A549 (cell line): ENCODE measurements at regions of chr19 and their contacts with region 1.

Region 1: GRCh38 chr19:40425450-40426287 is at the start of gene SERTAD1:
- DNase-seq: peak; percentile 100
- ATAC-seq: peak; percentile 78 to 85
- H3K4me3 ChIP-seq: peak within 1 kb of the TSS; percentile 66
- H3K27ac ChIP-seq: peak within 1 kb of the TSS; percentile 93 to 94
- H3K4me1 ChIP-seq: peaks cover 25% of the 10 kb centered on the region
- CTCF ChIP-seq: peak; percentile 100
- EP300 ChIP-seq: no peak; a peak in 1 of 5 replicates
- POLR2A ChIP-seq: peak; percentile 99
- RAD21 ChIP-seq: peak; percentile 11 to 73; a peak in 4 of 5 replicates
- polyA plus RNA-seq, gene SERTAD1: 10.0 and 10.7 TPM in 2 replicates

Region 2: GRCh38 chr19:40348125-40348913 is 77.3 kb before region 1 on chr19 and contains the starts of genes C19orf47 and PLD3:
- CTCF ChIA-PET with region 1: interaction called, 8 read pairs
- POLR2A ChIA-PET with region 1: interaction called, 19 read pairs
- DNase-seq: peak; percentile 100
- ATAC-seq: peak; percentile 98 to 99
- H3K4me3 ChIP-seq: peak within 1 kb of the TSS; percentile 80
- H3K27ac ChIP-seq: peak within 1 kb of the TSS; percentile 83 to 84
- H3K4me1 ChIP-seq: peaks cover 8% of the 10 kb centered on the region
- CTCF ChIP-seq: no peak
- EP300 ChIP-seq: no peak; a peak in 1 of 5 replicates
- POLR2A ChIP-seq: peak; percentile 99
- RAD21 ChIP-seq: no peak
- polyA plus RNA-seq, gene C19orf47: 32.8 and 39.8 TPM in 2 replicates
- polyA plus RNA-seq, gene PLD3: 290 and 350 TPM in 2 replicates

Region 3: DNA sequence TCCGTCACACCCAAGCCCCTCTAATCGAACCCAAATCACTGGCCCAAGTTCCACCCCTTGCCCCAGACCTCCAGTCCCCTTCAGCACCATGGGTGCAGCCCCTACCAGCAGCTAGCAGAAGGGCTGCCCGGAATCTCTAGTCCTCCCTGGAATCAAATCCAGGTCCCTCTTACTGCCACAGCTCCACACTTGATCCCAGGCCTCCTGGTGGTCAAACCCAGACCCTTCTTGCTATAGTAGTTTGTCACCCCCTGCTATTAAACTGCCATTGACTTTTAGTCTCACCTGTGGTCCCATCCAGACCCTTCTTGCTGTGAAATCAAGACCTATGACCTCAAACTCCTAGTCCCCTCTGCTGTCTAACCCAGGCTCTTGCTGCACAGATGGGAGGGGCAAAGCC is 44.3 kb before region 1 on chr19:
- CTCF ChIA-PET with region 1: interaction called, 11 read pairs
- POLR2A ChIA-PET with region 1: interaction called, 8 read pairs
- DNase-seq: peak in 1 of 2 experiments; percentile 68
- ATAC-seq: peak; percentile 27 to 43; a peak in 3 of 6 replicates
- H3K4me3 ChIP-seq: no peak overlapping the region
- H3K27ac ChIP-seq: no peak overlapping the region
- H3K4me1 ChIP-seq: no peaks in the 10 kb centered on the region
- CTCF ChIP-seq: no peak
- EP300 ChIP-seq: no peak
- POLR2A ChIP-seq: no peak
- RAD21 ChIP-seq: no peak

Region 4: GRCh38 chr19:40403262-40403984 is 22.2 kb before region 1 on chr19:
- CTCF ChIA-PET with region 1: interaction called, 240 read pairs
- POLR2A ChIA-PET with region 1: interaction called, 27 read pairs
- DNase-seq: peak; percentile 98 to 100
- ATAC-seq: peak; percentile 83 to 92
- H3K4me3 ChIP-seq: peak overlapping the region; percentile 61
- H3K27ac ChIP-seq: peak overlapping the region; percentile 66 to 84
- H3K4me1 ChIP-seq: peaks cover 10% of the 10 kb centered on the region
- CTCF ChIP-seq: no peak
- EP300 ChIP-seq: no peak
- POLR2A ChIP-seq: peak; percentile 57
- RAD21 ChIP-seq: no peak

Region 5: GRCh38 chr19:40529093-40529954 is 103.7 kb after region 1 on chr19:
- CTCF ChIA-PET with region 1: interaction called, 11 read pairs
- POLR2A ChIA-PET with region 1: interaction called, 3 read pairs
- DNase-seq: peak; percentile 94 to 100
- ATAC-seq: peak; percentile 37 to 78
- H3K4me3 ChIP-seq: peak overlapping the region; percentile 50
- H3K27ac ChIP-seq: peak overlapping the region; percentile 55 to 79
- H3K4me1 ChIP-seq: peaks cover 18% of the 10 kb centered on the region
- CTCF ChIP-seq: peak; percentile 99
- EP300 ChIP-seq: 0 out of 5 replicates have a peak, but pooled peaks of 1 of the 2 experiments have one; percentile 17
- POLR2A ChIP-seq: no peak
- RAD21 ChIP-seq: peak; percentile 43 to 72; a peak in 4 of 5 replicates

Region 6: DNA sequence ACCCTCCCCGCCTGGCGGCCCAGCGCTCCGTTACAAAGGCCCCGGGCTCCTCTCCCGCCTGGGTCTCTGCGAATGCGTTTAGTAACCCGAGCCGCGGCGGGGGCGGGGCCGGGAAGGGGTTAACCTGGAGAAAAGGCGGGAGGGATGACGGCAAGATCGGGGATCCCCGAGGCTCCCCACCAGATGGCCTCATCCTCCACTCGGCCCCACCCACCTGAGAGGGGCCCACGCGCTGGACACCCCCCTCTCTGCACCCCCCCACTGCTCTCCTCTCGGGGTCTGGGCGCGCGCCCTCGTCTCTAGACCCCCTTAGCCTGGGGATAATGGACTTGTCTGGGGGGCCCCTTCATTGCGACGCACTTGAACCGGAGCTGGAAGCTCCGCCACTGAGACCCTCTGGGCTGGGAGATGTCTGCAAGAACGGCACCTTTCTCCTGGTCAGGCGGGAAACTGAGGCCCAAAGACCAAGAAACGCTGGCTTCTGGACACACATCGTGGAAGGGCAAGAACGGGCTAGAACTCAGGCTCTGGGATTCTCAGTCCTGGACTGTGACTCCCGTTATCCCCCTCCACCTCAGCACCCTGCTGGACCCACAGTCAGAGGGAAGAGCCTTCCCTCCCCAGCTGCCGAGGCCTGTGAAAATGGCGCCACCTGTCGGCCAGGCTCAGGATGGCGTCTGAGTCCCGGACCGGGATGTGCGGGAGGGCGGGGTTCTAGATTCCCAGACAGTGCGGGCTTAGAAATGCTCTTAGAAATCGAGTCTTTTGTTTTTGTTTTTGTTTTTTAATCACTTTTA is 172.7 kb after region 1 on chr19:
- CTCF ChIA-PET with region 1: interaction called, 13 read pairs
- POLR2A ChIA-PET with region 1: interaction called, 4 read pairs
- DNase-seq: peak; percentile 97 to 99
- ATAC-seq: peak; percentile 49 to 76
- H3K4me3 ChIP-seq: peak overlapping the region; percentile 47
- H3K27ac ChIP-seq: peak overlapping the region; percentile 66 to 85
- H3K4me1 ChIP-seq: peaks cover 56% of the 10 kb centered on the region
- CTCF ChIP-seq: peak; percentile 100
- EP300 ChIP-seq: no peak
- POLR2A ChIP-seq: 0 out of 2 replicates have a peak, but pooled peaks have one; percentile 23
- RAD21 ChIP-seq: peak; percentile 100

Region 7: GRCh38 chr19:40822161-40822560 is 396.5 kb after region 1 on chr19:
- CTCF ChIA-PET with region 1: no interaction called
- POLR2A ChIA-PET with region 1: no interaction called
- DNase-seq: no peak
- ATAC-seq: no peak
- H3K4me3 ChIP-seq: no peak overlapping the region
- H3K27ac ChIP-seq: peak overlapping the region in 1 of 2 experiments; percentile 31; a peak in 2 of 6 replicates
- H3K4me1 ChIP-seq: peaks cover 39% of the 10 kb centered on the region
- CTCF ChIP-seq: no peak
- EP300 ChIP-seq: no peak
- POLR2A ChIP-seq: no peak
- RAD21 ChIP-seq: no peak